ENCODE measurements at regions of chr4 and their contacts with region 1.

Region 1: DNA sequence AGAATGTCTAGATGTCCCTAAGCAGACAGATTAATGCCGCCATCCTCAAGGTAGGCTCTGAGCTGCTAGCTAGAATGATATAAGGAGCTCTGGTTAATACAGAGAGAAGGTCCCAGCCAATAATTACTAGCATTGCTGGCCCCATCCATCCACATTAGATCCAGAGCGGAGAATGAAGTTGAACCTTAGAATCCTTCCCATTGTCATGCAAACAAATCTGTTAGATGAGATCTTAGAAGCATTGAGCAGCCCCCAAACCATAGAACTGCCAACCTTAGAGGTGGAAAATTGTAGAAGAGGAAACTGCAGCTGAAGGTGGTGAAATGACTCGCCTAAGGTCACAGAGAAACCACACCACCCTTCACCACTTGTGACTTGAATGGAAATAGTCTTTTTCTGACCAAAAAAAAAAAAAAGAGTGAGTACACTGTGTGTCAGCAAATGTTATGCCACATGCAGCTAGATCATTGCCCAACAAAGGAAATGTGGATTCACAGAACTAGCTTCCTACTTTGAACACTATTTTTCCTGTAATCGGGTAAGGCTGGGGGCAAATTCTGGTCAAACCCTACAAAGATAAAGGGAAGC is 162.1 kb downstream of the SMIM20 start:
- DNase-seq: peak; percentile 87
- H3K4me3 Mint-ChIP-seq: peak overlapping the region; percentile 52
- H3K27ac Mint-ChIP-seq: peak overlapping the region; percentile 98
- H3K4me1 Mint-ChIP-seq: peaks cover 70% of the 10 kb centered on the region
- H3K27me3 Mint-ChIP-seq: no peaks in the 10 kb centered on the region

Region 2: GRCh38 chr4:25938787-25939186 is 137.3 kb before region 1 on chr4:
- intact Hi-C with region 1: loop called (anchors 2 kb)
- DNase-seq: peak; percentile 65
- H3K4me3 Mint-ChIP-seq: peak overlapping the region; percentile 20
- H3K27ac Mint-ChIP-seq: peak overlapping the region; percentile 89
- H3K4me1 Mint-ChIP-seq: peaks cover 26% of the 10 kb centered on the region
- H3K27me3 Mint-ChIP-seq: peaks cover 5% of the 10 kb centered on the region

Region 3: GRCh38 chr4:26020083-26020668 is 55.9 kb before region 1 on chr4:
- intact Hi-C with region 1: loop called (anchors 1 kb)
- DNase-seq: peak; percentile 65
- H3K4me3 Mint-ChIP-seq: peak overlapping the region; percentile 27
- H3K27ac Mint-ChIP-seq: peak overlapping the region; percentile 61
- H3K4me1 Mint-ChIP-seq: peaks cover 18% of the 10 kb centered on the region
- H3K27me3 Mint-ChIP-seq: peaks cover 3% of the 10 kb centered on the region

Region 4: GRCh38 chr4:26061248-26061986 is 14.7 kb before region 1 on chr4:
- intact Hi-C with region 1: no loop called
- DNase-seq: peak; percentile 71
- H3K4me3 Mint-ChIP-seq: no peak overlapping the region
- H3K27ac Mint-ChIP-seq: no peak overlapping the region
- H3K4me1 Mint-ChIP-seq: peaks cover 20% of the 10 kb centered on the region
- H3K27me3 Mint-ChIP-seq: no peaks in the 10 kb centered on the region

Region 5: GRCh38 chr4:26130173-26130572 is 54.1 kb after region 1 on chr4:
- intact Hi-C with region 1: loop called (anchors 1 kb)
- DNase-seq: peak; percentile 67
- H3K4me3 Mint-ChIP-seq: peak overlapping the region; percentile 51
- H3K27ac Mint-ChIP-seq: peak overlapping the region; percentile 76
- H3K4me1 Mint-ChIP-seq: peaks cover 59% of the 10 kb centered on the region
- H3K27me3 Mint-ChIP-seq: no peaks in the 10 kb centered on the region

Region 6: DNA sequence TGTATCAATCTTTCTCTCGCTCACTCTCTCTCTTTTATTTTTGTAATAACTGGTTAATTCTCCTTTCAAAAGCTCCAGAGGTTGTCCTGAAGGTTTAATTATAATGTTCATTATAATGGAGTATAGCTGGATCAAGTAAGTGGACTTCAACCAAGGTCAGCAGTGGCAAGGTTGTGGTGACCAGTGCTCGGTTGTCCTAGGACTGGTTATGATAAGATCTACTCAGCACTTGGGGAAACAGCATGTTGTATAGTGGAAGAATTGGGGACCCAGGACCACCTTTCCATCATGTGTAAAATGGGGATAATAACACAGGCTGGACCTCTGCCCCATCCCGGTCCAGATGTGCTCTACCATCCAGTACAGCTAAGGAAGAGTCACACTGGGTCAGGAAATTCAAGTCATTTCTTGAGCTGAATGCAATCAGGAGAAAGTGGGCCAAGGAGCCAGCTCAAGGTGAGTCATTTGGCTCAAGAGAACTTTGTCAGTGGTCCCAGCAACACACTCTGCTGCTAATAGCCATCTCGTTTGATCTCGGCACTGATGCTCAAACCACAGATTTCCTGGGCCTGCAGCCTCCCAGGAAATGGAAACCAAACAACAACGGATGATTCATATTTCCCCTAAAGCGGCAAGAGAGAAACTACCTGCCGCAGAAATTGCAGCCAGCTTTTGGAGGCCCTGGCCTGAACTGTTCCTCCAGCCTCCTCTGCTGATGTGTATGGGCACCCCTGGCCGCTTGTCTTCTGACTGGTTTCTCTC is 121.1 kb after region 1 on chr4:
- intact Hi-C with region 1: loop called (anchors 1 kb)
- DNase-seq: peak; percentile 93
- H3K4me3 Mint-ChIP-seq: peak overlapping the region; percentile 74
- H3K27ac Mint-ChIP-seq: peak overlapping the region; percentile 96
- H3K4me1 Mint-ChIP-seq: peaks cover 72% of the 10 kb centered on the region
- H3K27me3 Mint-ChIP-seq: no peaks in the 10 kb centered on the region

Region 7: DNA sequence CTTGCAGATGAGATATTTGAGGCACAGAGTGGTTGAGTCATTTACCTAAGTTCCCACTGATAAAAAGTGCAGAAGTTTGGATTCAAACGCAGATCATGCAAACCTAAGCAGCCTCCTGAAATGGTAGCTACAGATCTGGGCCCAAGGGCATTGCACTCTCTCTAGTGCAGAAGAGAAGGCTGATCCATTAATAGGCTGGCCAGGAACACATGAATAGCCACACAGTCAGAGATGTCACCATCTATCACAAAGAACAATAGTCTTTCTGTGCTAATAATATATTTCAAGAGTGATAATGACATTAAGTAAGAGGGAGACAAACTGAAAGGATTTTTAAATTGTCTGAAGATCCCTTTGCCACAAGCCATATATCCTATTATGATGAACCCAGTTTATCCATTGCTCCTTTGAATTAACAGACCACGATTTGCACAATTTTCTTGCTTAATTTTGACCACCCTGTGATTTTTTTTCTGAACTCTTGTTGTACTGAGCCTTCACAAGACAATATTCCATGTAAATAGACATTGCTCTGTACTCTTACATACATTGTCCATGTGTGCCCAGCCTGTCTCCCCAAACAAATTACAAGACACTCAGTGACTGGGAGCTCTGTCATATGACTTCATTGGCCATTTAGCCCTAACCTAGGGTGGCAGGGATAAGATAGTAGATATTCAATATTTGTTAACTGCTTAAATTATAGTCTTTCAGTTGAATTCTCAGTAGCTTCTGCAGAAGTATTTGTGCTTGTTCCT is 132.3 kb after region 1 on chr4:
- intact Hi-C with region 1: no loop called
- DNase-seq: no peak
- H3K4me3 Mint-ChIP-seq: no peak overlapping the region
- H3K27ac Mint-ChIP-seq: no peak overlapping the region
- H3K4me1 Mint-ChIP-seq: peaks cover 25% of the 10 kb centered on the region
- H3K27me3 Mint-ChIP-seq: peaks cover 11% of the 10 kb centered on the region

Measured in activated CD4-positive, alpha-beta T cell treated with anti-CD3 and anti-CD28 coated beads, Interleukin-2, amount 10 ng/mL, durations not matched to agents 24 days and 14 days (primary cell).